Activated CD4-positive, alpha-beta T cell treated with anti-CD3 and anti-CD28 coated beads for 36 hours (primary cell): ENCODE measurements at regions of chr2 and their contacts with region 1.

Region 1: DNA sequence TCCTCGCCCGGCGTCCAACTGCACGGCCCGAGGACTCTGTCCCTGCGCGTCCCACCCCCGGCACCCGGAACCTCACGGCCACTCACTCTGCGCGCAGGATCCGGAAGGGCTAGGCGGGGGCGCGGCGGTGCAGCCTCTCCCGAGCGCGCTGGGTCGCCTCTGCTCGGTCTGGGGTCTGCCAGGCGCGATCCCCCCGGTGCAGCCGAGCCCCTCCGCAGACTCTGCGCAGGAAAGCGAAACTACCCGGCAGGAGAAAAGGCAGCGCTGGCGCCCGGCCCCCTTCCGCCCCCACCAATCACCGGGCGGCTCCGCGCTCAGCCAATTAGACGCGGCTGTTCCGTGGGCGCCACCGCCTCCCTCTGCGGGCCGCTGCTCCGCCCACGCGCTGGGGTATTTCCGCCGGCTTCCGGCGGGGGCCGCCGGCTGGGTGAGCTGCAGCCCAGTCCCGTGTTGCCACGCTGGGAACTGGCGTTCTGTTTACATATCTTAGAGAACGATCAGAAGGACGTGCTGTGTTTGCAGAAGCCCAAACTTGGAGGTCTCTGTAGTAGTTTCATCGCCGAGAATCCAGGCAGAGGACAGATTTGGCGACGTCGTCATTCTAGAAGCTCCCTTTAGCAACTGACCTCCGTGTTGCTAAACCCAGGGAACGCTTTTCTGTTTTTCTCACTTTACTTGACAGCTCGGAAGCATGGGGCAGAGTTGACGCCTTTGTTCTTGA is at the start of gene STAT1:
- DNase-seq: peak; percentile 98
- ATAC-seq: peak; percentile 79
- H3K4me3 Mint-ChIP-seq: no peak within 1 kb of the TSS
- H3K27ac Mint-ChIP-seq: no peak within 1 kb of the TSS
- H3K4me1 Mint-ChIP-seq: peaks cover 41% of the 10 kb centered on the region
- H3K27me3 Mint-ChIP-seq: no peaks in the 10 kb centered on the region
- total RNA-seq, gene STAT1: 317 to 343 TPM

Region 2: DNA sequence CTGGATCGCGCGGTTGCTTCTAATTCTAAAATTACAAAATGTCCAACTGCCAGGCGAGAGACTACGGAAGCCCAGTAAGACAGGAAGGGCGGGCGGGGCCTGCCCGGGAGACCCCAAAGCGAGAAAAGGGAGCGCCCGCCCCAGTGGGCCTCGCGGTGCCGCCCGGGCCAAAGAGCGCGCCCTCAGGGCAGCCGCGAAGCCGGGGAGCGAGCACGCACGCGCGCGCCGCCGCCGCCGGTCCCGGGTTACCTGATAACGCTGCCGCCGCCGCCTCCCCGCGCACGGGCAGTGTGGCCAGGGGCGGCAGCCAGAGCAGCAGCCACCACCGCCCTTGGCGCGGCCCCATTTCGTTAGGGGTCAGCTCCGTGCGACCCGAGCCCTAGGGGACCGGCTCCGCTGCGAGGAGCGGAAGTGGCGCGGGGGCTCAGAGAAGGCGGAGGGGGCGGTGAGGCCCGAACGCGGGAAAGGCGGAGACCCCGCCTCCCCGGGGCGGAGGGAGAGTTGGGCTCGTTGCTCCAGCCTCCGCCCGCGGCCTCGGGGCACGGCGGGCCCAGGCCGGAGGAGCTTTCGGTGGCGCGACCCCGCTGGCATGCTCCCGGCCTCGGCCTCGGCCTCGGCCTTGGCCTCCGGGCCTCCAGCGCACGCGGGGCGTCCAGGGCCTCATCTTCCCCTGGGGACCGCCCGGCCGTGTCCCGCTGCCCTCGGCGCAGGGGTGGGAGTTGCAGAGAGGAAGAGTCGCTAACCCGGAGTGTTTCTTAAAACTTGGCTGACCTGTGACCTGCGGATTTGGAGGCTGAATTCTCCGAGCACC is 479.6 kb before region 1 on chr2 and contains the start of gene NEMP2:
- CTCF ChIA-PET with region 1: no interaction called
- POLR2A ChIA-PET with region 1: no interaction called
- intact Hi-C with region 1: loop called in 1 of 2 experiments (anchors 2 kb)
- DNase-seq: peak; percentile 87
- ATAC-seq: peak; percentile 70
- H3K4me3 Mint-ChIP-seq: peak within 1 kb of the TSS; percentile 95
- H3K27ac Mint-ChIP-seq: peak within 1 kb of the TSS; percentile 98
- H3K4me1 Mint-ChIP-seq: peaks cover 52% of the 10 kb centered on the region
- H3K27me3 Mint-ChIP-seq: no peaks in the 10 kb centered on the region
- total RNA-seq, gene NEMP2: 24.6 to 25.1 TPM

Region 3: GRCh38 chr2:190964170-190964795 is 49.8 kb before region 1 on chr2:
- CTCF ChIA-PET with region 1: interaction called, 3 read pairs
- POLR2A ChIA-PET with region 1: no interaction called
- intact Hi-C with region 1: loop called in 1 of 2 experiments (anchors 2 kb)
- DNase-seq: no peak
- ATAC-seq: peak; percentile 32
- H3K4me3 Mint-ChIP-seq: no peak overlapping the region
- H3K27ac Mint-ChIP-seq: peak overlapping the region; percentile 62
- H3K4me1 Mint-ChIP-seq: peaks cover 17% of the 10 kb centered on the region
- H3K27me3 Mint-ChIP-seq: no peaks in the 10 kb centered on the region

Region 4: GRCh38 chr2:191030521-191031154 is 16.5 kb after region 1 on chr2:
- CTCF ChIA-PET with region 1: interaction called, 13 read pairs
- POLR2A ChIA-PET with region 1: no interaction called
- intact Hi-C with region 1: loop called (anchors 1 kb)
- DNase-seq: peak; percentile 57
- ATAC-seq: peak; percentile 82
- H3K4me3 Mint-ChIP-seq: no peak overlapping the region
- H3K27ac Mint-ChIP-seq: peak overlapping the region; percentile 55
- H3K4me1 Mint-ChIP-seq: peaks cover 38% of the 10 kb centered on the region
- H3K27me3 Mint-ChIP-seq: no peaks in the 10 kb centered on the region